ENCODE measurements at regions of chr16 and their contacts with region 1.

Region 1: GRCh38 chr16:24810951-24811843 is 34.6 kb upstream of the SLC5A11 start:
- DNase-seq: no peak
- ATAC-seq: peak in 2 of 8 donors; percentile 17 to 29
- H3K4me3 ChIP-seq: no peak overlapping the region
- H3K27ac ChIP-seq: no peak overlapping the region
- H3K4me1 ChIP-seq: peaks cover 0 to 7% (median 0%) of the 10 kb centered on the region in 9 donors
- H3K27me3 ChIP-seq: no peaks in the 10 kb centered on the region
- CTCF ChIP-seq: no peak

Region 2: GRCh38 chr16:24552705-24553246 is 258.4 kb before region 1 on chr16:
- intact Hi-C with region 1: loop called in 1 of 10 experiments (anchors 10 kb)
- DNase-seq: no peak
- ATAC-seq: no peak
- H3K4me3 ChIP-seq: no peak overlapping the region
- H3K27ac ChIP-seq: no peak overlapping the region
- H3K4me1 ChIP-seq: peaks cover 0 to 29% (median 10%) of the 10 kb centered on the region in 9 donors
- H3K27me3 ChIP-seq: no peaks in the 10 kb centered on the region
- CTCF ChIP-seq: no peak

Measured in heart right ventricle (tissue), 16 donors.